ENCODE measurements at regions of chr5 and their contacts with region 1.

Region 1: GRCh38 chr5:102099766-102100331 is 196.2 kb downstream of the SLCO4C1 start:
- DNase-seq: peak; percentile 97
- ATAC-seq: peak; percentile 100
- H3K4me3 ChIP-seq: peak overlapping the region in 1 of 3 experiments; percentile 55; a peak in 2 of 6 replicates
- H3K27ac ChIP-seq: peak overlapping the region; percentile 90
- H3K4me1 ChIP-seq: peaks cover 45% of the 10 kb centered on the region
- H3K27me3 ChIP-seq: no peaks in the 10 kb centered on the region
- CTCF ChIP-seq: no peak
- EP300 ChIP-seq: peak in 1 of 2 experiments; percentile 88; a peak in 2 of 4 replicates
- POLR2A ChIP-seq: peak in 1 of 2 experiments; percentile 49; a peak in 1 of 4 replicates
- RAD21 ChIP-seq: 0 out of 2 replicates have a peak, but pooled peaks have one; percentile 13

Region 2: GRCh38 chr5:102138243-102138653 is 38.4 kb after region 1 on chr5:
- CTCF ChIA-PET with region 1: no interaction called
- POLR2A ChIA-PET with region 1: interaction called, 8 read pairs
- in situ Hi-C with region 1: no loop called
- intact Hi-C with region 1: loop called (anchors 5 kb)
- DNase-seq: peak; percentile 94
- ATAC-seq: peak; percentile 100
- H3K4me3 ChIP-seq: peak overlapping the region; percentile 21 to 31 (median 24); a peak in 3 of 6 replicates
- H3K27ac ChIP-seq: peak overlapping the region; percentile 70
- H3K4me1 ChIP-seq: peaks cover 38% of the 10 kb centered on the region
- H3K27me3 ChIP-seq: no peaks in the 10 kb centered on the region
- CTCF ChIP-seq: no peak
- EP300 ChIP-seq: peak in 1 of 2 experiments; percentile 78; a peak in 1 of 4 replicates
- POLR2A ChIP-seq: no peak
- RAD21 ChIP-seq: no peak

Region 3: DNA sequence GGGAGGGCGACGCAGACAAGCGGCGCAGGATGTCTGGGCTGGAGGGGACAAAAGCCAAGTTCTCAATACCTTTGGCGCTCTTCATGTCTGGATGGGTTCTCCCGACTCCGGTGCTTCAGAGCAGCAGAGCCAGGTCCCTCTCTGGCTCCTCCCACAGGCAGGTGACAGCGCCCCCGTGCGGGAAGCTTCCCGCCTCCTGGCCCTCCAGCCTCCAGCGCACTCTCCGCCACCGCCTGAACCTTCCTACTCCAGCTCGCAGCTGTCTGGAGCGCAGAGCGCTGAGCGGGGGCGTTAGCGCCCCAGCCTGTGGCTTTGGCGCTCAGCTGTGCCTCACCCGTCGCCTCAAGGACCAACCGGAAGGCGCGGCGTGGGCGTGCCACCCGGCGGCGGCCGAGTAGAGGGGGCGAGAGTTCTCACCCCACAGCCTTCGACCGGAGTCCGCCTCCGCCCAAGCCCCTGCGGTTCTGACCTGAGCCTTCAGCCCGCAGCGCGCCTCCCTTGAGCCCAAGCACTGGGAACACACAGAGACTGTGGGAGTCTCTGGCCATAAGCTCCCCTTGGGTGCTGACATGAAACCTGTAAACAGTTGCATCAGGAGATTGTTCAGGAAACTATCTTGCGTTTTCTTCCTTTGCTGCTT is 196.4 kb after region 1 on chr5 and contains the start of gene SLCO4C1:
- CTCF ChIA-PET with region 1: no interaction called
- POLR2A ChIA-PET with region 1: no interaction called
- in situ Hi-C with region 1: no loop called
- intact Hi-C with region 1: loop called (anchors 10 kb)
- DNase-seq: peak; percentile 70
- ATAC-seq: peak; percentile 97
- H3K4me3 ChIP-seq: peak within 1 kb of the TSS; percentile 47 to 90 (median 84)
- H3K27ac ChIP-seq: peak within 1 kb of the TSS; percentile 61
- H3K4me1 ChIP-seq: peaks cover 32% of the 10 kb centered on the region
- H3K27me3 ChIP-seq: no peaks in the 10 kb centered on the region
- CTCF ChIP-seq: peak; percentile 99
- EP300 ChIP-seq: peak in 1 of 2 experiments; percentile 19; a peak in 1 of 4 replicates
- POLR2A ChIP-seq: no peak; a peak in 2 of 4 replicates
- RAD21 ChIP-seq: peak; percentile 69
- total RNA-seq, gene SLCO4C1: 7.8 and 9.6 TPM in 2 replicates

Measured in HepG2 (cell line).